PC-9 (cell line): ENCODE measurements at regions of chr1 and their contacts with region 1.

Region 1: GRCh38 chr1:201709564-201710295 is 119.2 kb upstream of the IPO9 start:
- DNase-seq: peak in 1 of 2 experiments; percentile 71
- H3K4me3 ChIP-seq: no peak overlapping the region
- H3K27ac ChIP-seq: no peak overlapping the region
- H3K4me1 ChIP-seq: peaks cover 27% of the 10 kb centered on the region
- H3K27me3 ChIP-seq: no peaks in the 10 kb centered on the region
- CTCF ChIP-seq: peak; percentile 85

Region 2: GRCh38 chr1:201739492-201740085 is 29.9 kb after region 1 on chr1:
- CTCF ChIA-PET with region 1: interaction called, 7 read pairs
- POLR2A ChIA-PET with region 1: interaction called, 8 read pairs
- intact Hi-C with region 1: loop called (anchors 1 kb)
- DNase-seq: peak; percentile 65 to 79
- H3K4me3 ChIP-seq: peak overlapping the region; percentile 68
- H3K27ac ChIP-seq: no peak overlapping the region
- H3K4me1 ChIP-seq: peaks cover 23% of the 10 kb centered on the region
- H3K27me3 ChIP-seq: no peaks in the 10 kb centered on the region
- CTCF ChIP-seq: no peak

Region 3: DNA sequence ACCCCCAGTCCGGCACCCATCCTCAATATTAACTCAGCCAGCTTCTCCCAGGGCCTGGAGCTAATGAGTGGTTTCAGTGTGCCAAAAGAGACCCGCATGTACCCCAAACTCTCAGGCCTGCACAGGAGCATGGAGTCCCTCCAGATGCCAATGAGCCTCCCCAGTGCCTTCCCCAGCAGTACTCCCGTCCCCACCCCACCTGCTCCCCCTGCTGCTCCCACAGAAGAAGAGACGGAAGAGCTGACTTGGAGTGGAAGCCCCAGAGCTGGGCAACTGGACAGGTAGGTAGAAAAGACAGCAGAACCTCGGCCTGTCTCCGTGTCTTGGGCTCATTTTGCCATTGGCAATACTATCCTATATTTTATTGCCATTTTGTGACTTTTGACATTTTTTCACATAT is 73.8 kb after region 1 on chr1:
- CTCF ChIA-PET with region 1: interaction called, 10 read pairs
- POLR2A ChIA-PET with region 1: no interaction called
- intact Hi-C with region 1: no loop called
- DNase-seq: no peak
- H3K4me3 ChIP-seq: no peak overlapping the region
- H3K27ac ChIP-seq: no peak overlapping the region
- H3K4me1 ChIP-seq: no peaks in the 10 kb centered on the region
- H3K27me3 ChIP-seq: no peaks in the 10 kb centered on the region
- CTCF ChIP-seq: no peak

Region 4: GRCh38 chr1:201859424-201859823 is 149.7 kb after region 1 on chr1:
- CTCF ChIA-PET with region 1: no interaction called
- POLR2A ChIA-PET with region 1: interaction called, 14 read pairs
- intact Hi-C with region 1: no loop called
- DNase-seq: peak; percentile 48 to 68
- H3K4me3 ChIP-seq: no peak overlapping the region
- H3K27ac ChIP-seq: no peak overlapping the region
- H3K4me1 ChIP-seq: 0 out of 2 replicates have a peak, but pooled peaks cover 6% of the 10 kb centered on the region
- H3K27me3 ChIP-seq: no peaks in the 10 kb centered on the region
- CTCF ChIP-seq: no peak

Region 5: GRCh38 chr1:202105539-202106276 is 396.0 kb after region 1 on chr1:
- CTCF ChIA-PET with region 1: no interaction called
- POLR2A ChIA-PET with region 1: no interaction called
- intact Hi-C with region 1: loop called (anchors 10 kb)
- DNase-seq: peak; percentile 91 to 95
- H3K4me3 ChIP-seq: peak overlapping the region; percentile 26; the same call in 1 of the 2 replicates
- H3K27ac ChIP-seq: peak overlapping the region; percentile 99
- H3K4me1 ChIP-seq: peaks cover 76% of the 10 kb centered on the region
- H3K27me3 ChIP-seq: no peaks in the 10 kb centered on the region
- CTCF ChIP-seq: no peak